Testis (tissue), 5 donors: ENCODE measurements at regions of chr3 and their contacts with region 1.

Region 1: DNA sequence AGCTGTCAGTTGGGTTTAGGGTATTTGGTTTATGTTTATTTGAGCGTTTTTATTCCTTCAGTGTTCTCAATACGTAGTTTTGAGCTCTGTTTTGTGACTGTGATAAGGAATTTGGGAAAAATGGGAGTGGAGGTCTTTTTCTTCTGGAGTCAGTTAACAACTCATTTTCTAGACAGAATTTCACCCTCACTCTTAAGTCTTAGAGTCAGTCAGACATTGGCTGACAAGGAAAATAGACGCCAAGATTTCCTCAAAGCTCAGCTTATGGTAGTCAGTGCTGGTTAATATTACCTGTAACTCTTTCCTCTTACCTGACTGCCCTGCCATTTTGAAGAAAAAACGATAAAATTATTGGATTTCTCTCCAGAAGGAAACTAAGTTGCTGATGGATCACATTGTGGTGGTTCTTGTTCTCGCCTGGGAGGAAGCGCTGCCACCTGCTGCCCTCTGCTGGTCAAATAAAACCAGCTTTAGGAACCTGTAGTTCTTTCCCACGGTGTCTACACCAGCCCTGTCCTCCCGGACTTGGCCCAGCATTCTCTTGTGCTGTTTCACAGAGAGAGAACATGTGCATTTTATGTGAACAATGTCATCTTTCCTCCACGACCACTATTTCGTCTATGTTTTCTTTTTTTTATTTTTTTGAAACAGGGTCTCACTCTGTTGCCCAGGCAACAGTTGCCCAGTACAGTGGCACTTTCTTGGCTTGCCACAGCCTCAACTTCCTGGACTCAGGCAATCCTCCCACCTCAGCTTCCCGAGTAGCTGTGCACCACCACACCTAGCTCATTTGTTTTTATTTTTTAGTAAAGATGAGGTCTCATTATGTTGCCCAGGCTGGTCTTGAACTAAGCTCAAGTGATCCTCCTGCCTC is 41.4 kb upstream of the UMPS start:
- DNase-seq: peak; percentile 89
- H3K4me3 ChIP-seq: no peak overlapping the region
- H3K27ac ChIP-seq: no peak overlapping the region
- H3K4me1 ChIP-seq: no peaks in the 10 kb centered on the region
- H3K27me3 ChIP-seq: no peaks in the 10 kb centered on the region
- CTCF ChIP-seq: peak; percentile 63 to 84 (median 78)
- POLR2A ChIP-seq: no peak

Region 2: DNA sequence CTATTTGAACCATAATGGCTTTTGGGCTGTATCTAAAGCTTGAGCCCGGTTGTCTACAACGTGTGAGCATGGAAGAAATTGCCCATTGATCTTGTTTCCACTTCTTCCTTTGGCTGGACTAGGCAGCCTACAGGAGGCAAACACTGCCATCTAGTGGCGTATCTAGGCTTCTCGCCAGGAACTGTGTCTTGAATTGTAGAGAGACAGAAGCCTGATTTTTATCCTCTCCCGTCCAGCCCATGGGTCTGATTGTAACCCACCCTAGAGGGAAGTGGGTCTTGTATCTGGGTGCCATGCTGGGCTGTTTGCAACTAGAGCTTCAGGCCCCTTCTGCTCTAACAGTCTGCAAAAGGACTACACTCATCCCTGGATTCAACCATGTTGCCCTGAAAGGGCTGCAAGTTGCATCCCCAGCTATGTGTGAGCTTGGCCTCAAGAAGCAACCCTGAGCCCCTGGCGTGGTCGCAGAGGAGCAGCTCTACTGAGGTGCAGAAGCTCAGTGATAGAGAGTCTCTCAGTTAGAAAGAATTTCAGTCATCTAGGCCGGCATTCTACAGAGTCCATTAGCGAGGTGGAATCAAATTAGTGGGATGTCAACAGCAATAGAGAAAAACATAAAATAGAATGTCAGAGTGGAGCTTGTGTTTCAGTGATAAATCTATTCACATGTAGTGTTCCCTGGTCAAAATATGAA is 128.8 kb before region 1 on chr3:
- intact Hi-C with region 1: loop called (anchors 5 kb)
- DNase-seq: peak; percentile 87
- H3K4me3 ChIP-seq: no peak overlapping the region
- H3K27ac ChIP-seq: peak overlapping the region in 1 of 2 donors; percentile 55
- H3K4me1 ChIP-seq: peaks cover 42% of the 10 kb centered on the region
- H3K27me3 ChIP-seq: no peaks in the 10 kb centered on the region
- CTCF ChIP-seq: peak; percentile 68 to 83 (median 80)
- POLR2A ChIP-seq: no peak

Region 3: GRCh38 chr3:124620600-124621063 is 68.2 kb before region 1 on chr3:
- intact Hi-C with region 1: no loop called
- DNase-seq: peak; percentile 43
- H3K4me3 ChIP-seq: no peak overlapping the region
- H3K27ac ChIP-seq: peak overlapping the region in 1 of 2 donors; percentile 19
- H3K4me1 ChIP-seq: no peaks in the 10 kb centered on the region
- H3K27me3 ChIP-seq: no peaks in the 10 kb centered on the region
- CTCF ChIP-seq: no peak
- POLR2A ChIP-seq: no peak